ENCODE measurements at regions of chr4 and their contacts with region 1.

Region 1: GRCh38 chr4:173318648-173319211 is 15.4 kb downstream of the HMGB2 start:
- DNase-seq: no peak
- ATAC-seq: no peak
- H3K4me3 Mint-ChIP-seq: no peak overlapping the region
- H3K27ac Mint-ChIP-seq: no peak overlapping the region
- H3K4me1 Mint-ChIP-seq: peaks cover 4% of the 10 kb centered on the region
- H3K27me3 Mint-ChIP-seq: no peaks in the 10 kb centered on the region

Region 2: DNA sequence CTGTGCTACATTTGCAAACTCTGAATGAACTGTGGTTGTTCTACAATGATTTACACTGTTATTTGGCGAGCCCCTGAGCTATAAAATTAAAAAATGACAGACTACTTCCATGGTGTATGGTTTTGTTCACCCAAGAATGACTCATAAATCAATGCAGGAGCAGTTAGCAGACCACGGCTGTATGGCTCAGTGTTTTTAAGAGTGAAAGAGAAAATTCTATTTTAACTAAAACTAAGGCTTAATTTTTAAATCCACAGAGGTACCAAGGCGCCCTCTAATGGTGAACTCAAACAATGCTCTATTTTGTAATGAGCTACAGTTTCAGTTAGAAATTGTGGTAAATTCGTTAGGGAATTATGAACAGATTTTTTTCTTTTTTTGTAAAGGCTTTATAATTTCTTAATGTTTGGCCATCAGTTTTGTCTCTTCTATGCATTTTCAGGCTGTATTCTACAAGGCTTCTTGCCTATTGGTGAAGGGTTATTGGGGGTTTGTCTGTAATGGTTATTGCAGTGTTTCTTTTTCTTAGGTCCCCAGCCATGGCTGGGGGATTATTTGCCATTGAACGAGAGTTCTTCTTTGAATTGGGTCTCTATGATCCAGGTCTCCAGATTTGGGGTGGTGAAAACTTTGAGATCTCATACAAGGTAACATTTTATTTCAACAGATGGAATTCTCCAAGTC is 17.1 kb before region 1 on chr4:
- CTCF ChIA-PET with region 1: interaction called, 19 read pairs
- DNase-seq: no peak
- ATAC-seq: peak; percentile 36
- H3K4me3 Mint-ChIP-seq: no peak overlapping the region
- H3K27ac Mint-ChIP-seq: no peak overlapping the region
- H3K4me1 Mint-ChIP-seq: peaks cover 3% of the 10 kb centered on the region
- H3K27me3 Mint-ChIP-seq: no peaks in the 10 kb centered on the region

Region 3: DNA sequence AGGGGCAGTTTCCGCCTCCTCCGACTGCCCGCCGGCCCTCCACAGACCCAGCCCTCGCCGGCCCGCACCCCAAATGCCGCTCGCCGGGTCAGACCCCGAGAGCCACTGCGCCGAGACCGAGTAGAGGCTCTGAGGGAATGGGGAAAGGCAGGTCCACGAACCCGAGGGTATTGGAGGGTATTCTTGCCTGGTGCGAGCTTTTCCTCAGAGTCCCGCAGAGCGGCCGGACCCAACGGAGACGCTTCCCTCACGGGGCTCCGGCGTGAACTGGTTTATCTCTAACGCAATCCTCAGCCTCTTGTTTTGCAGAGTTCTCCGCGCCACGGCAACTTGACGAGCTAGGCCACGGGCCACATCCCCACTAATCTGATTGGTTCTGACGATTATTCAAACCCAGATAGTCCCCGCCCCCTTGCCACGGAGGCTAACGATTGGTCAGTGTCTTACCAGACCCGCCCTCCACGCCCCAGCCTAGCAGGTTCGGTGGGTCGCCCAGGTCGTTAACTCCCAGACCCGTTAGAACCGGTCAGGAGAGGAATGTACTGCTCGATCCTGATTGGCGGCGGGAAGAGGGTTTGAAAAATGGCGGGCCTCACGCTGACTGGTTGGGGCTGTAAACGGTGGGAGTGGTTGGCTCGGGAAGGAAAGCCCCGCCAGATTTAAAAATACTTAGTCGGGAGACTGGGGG is 15.5 kb after region 1 on chr4 and contains the start of gene HMGB2:
- CTCF ChIA-PET with region 1: interaction called, 13 read pairs
- DNase-seq: peak; percentile 100
- ATAC-seq: peak; percentile 93
- H3K4me3 Mint-ChIP-seq: peak within 1 kb of the TSS; percentile 87
- H3K27ac Mint-ChIP-seq: peak within 1 kb of the TSS; percentile 98
- H3K4me1 Mint-ChIP-seq: peaks cover 29% of the 10 kb centered on the region
- H3K27me3 Mint-ChIP-seq: no peaks in the 10 kb centered on the region
- total RNA-seq, gene HMGB2: 646 to 837 TPM

Region 4: DNA sequence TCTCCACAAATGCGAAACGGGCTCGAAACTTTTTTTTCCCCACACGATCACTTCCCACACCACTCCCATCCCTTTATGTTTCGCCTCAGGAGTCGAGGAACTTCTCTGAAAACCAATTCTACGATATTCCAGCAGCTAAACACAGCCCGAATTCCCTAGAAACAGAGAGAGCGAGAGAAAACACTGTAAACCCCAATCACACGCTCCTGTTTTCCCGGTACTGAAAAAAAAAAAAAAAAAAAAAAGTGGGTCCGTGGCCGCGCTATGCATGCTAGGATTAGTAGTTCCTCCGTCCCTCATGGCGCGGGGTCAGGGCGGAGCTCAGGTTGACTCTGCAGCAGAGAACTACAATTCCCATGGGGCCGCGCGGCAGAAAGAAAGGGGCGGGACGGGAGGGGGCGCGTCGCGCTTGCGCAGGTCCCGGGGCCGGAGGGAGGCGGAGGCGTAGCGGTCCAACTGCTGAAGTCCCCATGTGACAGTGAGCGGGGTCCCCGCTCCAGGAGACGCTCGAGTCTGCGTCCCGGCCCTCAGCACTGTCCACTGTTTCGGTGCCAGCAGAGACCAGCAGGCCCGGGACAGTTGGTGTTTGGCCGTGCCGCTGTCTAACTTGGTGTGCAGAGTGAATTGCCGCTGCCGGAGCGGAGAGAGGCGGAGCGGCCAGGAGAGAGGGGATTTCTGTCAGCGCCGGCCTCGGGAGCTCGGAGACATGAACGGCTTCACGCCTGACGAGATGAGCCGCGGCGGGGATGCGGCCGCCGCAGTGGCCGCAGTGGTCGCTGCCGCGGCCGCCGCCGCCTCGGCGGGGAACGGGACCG is 52.0 kb after region 1 on chr4 and contains the start of gene SAP30:
- CTCF ChIA-PET with region 1: interaction called, 11 read pairs
- DNase-seq: peak; percentile 98
- ATAC-seq: peak; percentile 79
- H3K4me3 Mint-ChIP-seq: peak within 1 kb of the TSS; percentile 98
- H3K27ac Mint-ChIP-seq: peak within 1 kb of the TSS; percentile 99
- H3K4me1 Mint-ChIP-seq: peaks cover 45% of the 10 kb centered on the region
- H3K27me3 Mint-ChIP-seq: no peaks in the 10 kb centered on the region
- total RNA-seq, gene SAP30: 32.7 to 34.0 TPM

Region 5: DNA sequence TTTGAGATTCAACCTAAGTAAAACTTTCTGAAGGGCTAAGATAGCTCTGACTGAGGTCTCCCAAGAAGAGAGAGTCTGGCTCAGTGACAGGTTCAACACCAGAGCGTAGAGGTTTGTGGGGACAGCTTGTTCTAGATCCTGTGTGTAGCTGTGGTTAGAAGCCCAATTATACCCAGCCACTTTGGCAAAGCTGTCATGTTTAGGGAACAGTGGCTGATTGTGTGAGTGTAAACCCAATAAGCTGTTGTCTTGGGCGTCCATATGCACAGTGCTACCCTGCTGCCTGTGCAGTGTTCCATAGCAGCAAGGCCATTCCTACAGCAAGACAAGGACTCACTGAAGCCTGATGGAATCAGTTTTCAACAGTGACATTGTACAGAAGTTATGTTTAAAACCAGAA is 91.3 kb after region 1 on chr4:
- CTCF ChIA-PET with region 1: interaction called, 49 read pairs
- DNase-seq: no peak
- ATAC-seq: peak; percentile 16
- H3K4me3 Mint-ChIP-seq: no peak overlapping the region
- H3K27ac Mint-ChIP-seq: no peak overlapping the region
- H3K4me1 Mint-ChIP-seq: peaks cover 19% of the 10 kb centered on the region
- H3K27me3 Mint-ChIP-seq: no peaks in the 10 kb centered on the region

Region 6: GRCh38 chr4:173420324-173420752 is 101.6 kb after region 1 on chr4:
- CTCF ChIA-PET with region 1: interaction called, 49 read pairs
- DNase-seq: no peak
- ATAC-seq: no peak
- H3K4me3 Mint-ChIP-seq: no peak overlapping the region
- H3K27ac Mint-ChIP-seq: no peak overlapping the region
- H3K4me1 Mint-ChIP-seq: peaks cover 8% of the 10 kb centered on the region
- H3K27me3 Mint-ChIP-seq: no peaks in the 10 kb centered on the region

Measured in activated CD8-positive, alpha-beta memory T cell treated with anti-CD3 and anti-CD28 coated beads, Interleukin-2, amount 10 ng/mL, durations not matched to agents 7 days and 5 days (primary cell).